ENCODE measurements at regions of chr9 and their contacts with region 1.

Region 1: DNA sequence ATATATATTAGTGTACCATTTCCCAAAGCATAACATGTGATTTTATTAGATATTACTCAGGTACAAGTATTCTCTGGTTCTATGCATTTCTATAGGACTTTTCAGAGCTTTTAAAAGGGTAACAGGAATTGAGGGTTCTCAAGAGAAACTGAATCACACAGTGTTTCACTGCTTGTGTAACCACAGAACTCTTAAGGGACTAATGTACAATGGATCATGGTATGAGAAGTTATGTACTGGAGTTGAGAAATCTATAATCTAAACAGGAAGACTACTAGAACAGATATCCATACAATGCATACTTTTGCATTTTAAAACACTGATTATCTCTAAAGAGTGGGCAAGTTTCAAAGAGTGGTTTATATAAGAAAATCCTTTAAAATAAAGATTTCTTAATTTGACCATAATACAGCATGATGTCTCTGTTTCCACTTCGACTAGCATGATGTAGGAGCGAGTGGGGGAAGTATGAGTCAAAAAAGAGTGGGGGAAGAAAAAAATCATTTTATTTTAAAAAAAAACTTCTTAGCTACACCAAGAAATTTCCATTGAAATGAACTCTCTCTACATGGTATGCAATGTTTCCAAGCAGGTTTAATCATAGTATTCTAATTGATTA is 183.5 kb downstream of the RFX3 start:
- DNase-seq: no peak
- H3K4me3 Mint-ChIP-seq: peak overlapping the region; percentile 47
- H3K27ac Mint-ChIP-seq: peak overlapping the region; percentile 80
- H3K4me1 Mint-ChIP-seq: peaks cover 21% of the 10 kb centered on the region
- H3K27me3 Mint-ChIP-seq: no peaks in the 10 kb centered on the region

Region 2: GRCh38 chr9:3385871-3386270 is 43.6 kb after region 1 on chr9:
- intact Hi-C with region 1: loop called (anchors 1 kb)
- DNase-seq: peak; percentile 14
- H3K4me3 Mint-ChIP-seq: no peak overlapping the region
- H3K27ac Mint-ChIP-seq: no peak overlapping the region
- H3K4me1 Mint-ChIP-seq: peaks cover 23% of the 10 kb centered on the region
- H3K27me3 Mint-ChIP-seq: no peaks in the 10 kb centered on the region

Region 3: GRCh38 chr9:3401221-3401954 is 59.1 kb after region 1 on chr9:
- intact Hi-C with region 1: no loop called
- DNase-seq: no peak
- H3K4me3 Mint-ChIP-seq: no peak overlapping the region
- H3K27ac Mint-ChIP-seq: no peak overlapping the region
- H3K4me1 Mint-ChIP-seq: peaks cover 17% of the 10 kb centered on the region
- H3K27me3 Mint-ChIP-seq: no peaks in the 10 kb centered on the region

Region 4: GRCh38 chr9:3441197-3441816 is 99.0 kb after region 1 on chr9:
- intact Hi-C with region 1: loop called (anchors 10 kb)
- DNase-seq: peak; percentile 27
- H3K4me3 Mint-ChIP-seq: no peak overlapping the region
- H3K27ac Mint-ChIP-seq: no peak overlapping the region
- H3K4me1 Mint-ChIP-seq: peaks cover 3% of the 10 kb centered on the region
- H3K27me3 Mint-ChIP-seq: no peaks in the 10 kb centered on the region